ENCODE measurements at regions of chr11 and their contacts with region 1.

Region 1: DNA sequence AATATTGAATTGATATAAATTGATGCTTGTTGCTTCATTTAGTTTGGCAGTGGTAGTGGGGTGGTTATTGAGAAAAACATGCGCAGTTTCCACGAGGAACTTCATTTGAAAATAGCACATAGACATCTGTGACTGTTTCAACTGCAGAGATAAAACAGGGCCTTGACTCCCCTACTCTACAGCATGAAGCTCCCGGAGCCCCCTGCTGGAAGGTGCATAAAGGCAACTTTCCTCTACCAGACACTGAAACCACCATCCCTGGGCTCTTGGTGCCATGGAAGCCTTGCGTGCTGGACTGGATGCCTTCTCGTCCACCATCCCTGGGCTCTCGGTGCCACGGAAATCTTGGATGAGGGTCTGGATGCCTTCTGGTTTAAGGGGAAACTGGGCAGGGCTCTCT is 195.9 kb downstream of the CSNK2A3 start:
- DNase-seq: no peak
- H3K4me3 Mint-ChIP-seq: no peak overlapping the region
- H3K27ac Mint-ChIP-seq: no peak overlapping the region
- H3K4me1 Mint-ChIP-seq: peaks cover 9% of the 10 kb centered on the region
- H3K27me3 Mint-ChIP-seq: no peaks in the 10 kb centered on the region

Region 2: DNA sequence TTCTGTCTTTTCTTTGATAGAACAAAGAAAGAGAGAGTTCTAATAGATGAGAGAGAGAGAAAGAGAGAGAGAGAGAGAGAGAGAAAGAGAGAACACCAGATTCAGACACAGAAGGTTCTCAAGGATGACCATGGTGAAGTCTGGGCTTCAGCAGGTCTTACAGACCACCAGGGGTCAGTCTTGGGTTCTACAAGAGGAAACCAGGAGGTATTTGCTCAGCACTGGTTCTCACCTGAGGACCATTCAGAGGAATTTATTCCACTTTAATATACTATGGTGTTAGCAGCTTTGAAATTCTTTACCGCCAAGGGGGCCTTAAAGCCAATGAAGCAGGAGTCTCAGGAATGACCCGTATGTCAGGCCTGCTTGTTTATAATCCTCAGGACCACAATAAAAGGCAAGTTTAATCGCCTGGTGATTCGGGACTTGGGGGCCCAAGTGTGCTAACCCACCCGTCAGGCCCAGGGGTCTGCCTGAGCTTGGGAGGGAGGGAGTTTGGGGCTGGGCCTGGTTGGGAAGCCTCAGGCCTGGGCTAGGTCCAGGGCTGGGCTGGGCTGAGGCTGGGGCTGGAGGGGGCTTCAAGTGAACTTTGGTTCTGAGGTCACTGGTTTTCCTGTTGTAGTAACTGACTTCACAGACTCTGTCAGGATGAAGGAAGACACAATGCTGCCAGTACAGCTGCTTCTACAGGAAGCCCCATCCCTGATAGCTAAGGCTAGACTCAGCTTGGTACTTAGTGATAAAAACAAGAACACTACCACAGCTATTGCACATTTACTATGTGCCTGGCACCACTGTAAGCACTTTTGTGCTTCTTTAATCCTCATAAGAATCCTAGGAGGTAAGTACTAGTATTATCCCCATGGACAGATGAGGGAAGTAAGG is 120.1 kb before region 1 on chr11:
- intact Hi-C with region 1: loop called (anchors 2 kb)
- DNase-seq: no peak
- H3K4me3 Mint-ChIP-seq: no peak overlapping the region
- H3K27ac Mint-ChIP-seq: no peak overlapping the region
- H3K4me1 Mint-ChIP-seq: peaks cover 2% of the 10 kb centered on the region
- H3K27me3 Mint-ChIP-seq: peaks cover 6% of the 10 kb centered on the region

Region 3: DNA sequence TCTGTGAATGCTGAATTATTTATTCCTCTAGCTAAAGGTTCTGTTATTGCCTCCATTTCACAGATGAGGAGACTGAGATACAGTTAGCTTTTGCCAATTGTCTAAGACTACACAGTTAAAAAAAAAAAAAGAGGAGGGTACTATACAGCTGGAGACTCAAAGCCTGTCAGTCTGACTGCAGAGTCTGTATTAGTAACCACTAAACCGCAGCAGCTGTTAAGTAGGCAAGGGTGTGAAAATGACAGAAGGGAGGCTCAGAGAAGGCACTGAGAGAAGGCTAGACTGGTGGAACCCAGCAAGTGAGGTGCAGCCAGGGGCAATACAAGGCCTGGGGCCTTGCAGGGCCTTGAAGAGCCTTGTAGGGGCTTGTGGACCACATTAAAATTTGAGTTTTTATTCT is 14.7 kb after region 1 on chr11:
- intact Hi-C with region 1: no loop called
- DNase-seq: no peak
- H3K4me3 Mint-ChIP-seq: no peak overlapping the region
- H3K27ac Mint-ChIP-seq: no peak overlapping the region
- H3K4me1 Mint-ChIP-seq: peaks cover 15% of the 10 kb centered on the region
- H3K27me3 Mint-ChIP-seq: peaks cover 2% of the 10 kb centered on the region